AG04449 (cell line): ENCODE measurements at regions of chr9 and their contacts with region 1.

Region 1: DNA sequence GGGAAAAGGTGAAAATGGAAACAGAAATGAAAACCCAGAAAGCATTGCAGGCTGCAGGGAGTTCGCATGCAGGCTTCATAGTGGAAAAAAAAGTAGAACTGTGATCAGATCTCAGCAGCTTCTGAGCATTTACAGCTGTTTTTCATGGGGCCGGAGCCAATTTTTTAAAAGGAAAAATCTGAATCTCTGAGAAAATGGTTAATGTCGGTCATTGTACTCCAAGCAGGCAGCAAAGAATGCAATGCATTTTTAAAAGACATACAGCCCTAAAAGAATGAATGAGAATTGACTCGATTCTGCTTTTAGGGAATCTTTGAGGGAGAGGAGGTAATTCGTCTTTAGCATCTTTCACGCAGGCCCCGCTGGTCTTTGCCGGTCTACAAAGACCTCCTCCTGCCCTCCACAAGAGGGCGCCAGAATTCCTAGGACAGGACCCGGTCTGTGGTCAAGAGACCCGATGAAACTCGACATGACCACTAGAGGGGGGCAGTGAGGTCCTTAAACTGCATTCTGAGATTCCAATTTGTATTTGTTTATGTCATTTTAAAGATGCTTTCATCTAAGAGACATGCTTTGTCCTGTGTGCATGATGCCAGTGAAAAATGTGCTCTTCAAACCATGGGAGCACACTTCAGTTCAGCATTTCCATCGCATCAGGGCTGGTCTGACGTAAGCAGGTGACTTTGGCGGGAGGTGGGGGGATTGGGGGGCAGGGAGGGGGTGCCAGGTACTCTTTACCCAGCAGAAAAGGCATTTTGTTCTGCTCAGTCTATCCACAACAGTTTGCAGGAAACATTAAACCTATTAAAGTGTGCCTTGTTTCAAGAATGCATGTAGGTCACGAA is 43.7 kb upstream of the TMEM252 start:
- DNase-seq: peak; percentile 33
- H3K4me3 ChIP-seq: no peak overlapping the region
- CTCF ChIP-seq: peak; percentile 97

Region 2: DNA sequence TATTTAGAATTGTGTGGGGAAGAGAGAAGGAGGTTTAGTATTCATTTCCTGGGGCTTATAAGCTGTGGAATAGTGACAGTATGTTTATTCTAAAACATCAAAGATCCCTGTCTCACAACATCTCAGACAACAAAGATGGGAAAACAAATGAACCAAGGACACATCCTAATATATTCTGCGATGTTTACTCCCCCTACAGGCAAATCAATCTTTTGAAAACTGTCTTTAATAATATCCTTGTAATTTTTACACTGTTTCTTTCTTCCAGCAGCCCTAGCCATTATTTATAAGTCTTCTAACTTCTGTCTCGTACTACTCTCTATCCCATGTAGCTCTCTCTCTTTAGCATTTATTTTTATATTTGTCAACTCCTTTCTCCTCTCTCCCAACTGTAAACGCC is 10.3 kb before region 1 on chr9:
- CTCF ChIA-PET with region 1: interaction called, 20 read pairs
- POLR2A ChIA-PET with region 1: no interaction called
- DNase-seq: no peak
- H3K4me3 ChIP-seq: no peak overlapping the region
- CTCF ChIP-seq: no peak

Region 3: GRCh38 chr9:68941780-68942459 is 357.5 kb after region 1 on chr9:
- CTCF ChIA-PET with region 1: no interaction called
- POLR2A ChIA-PET with region 1: no interaction called
- DNase-seq: no peak
- H3K4me3 ChIP-seq: no peak overlapping the region
- CTCF ChIP-seq: no peak

Region 4: GRCh38 chr9:68999393-69000105 is 415.1 kb after region 1 on chr9:
- CTCF ChIA-PET with region 1: interaction called, 22 read pairs
- POLR2A ChIA-PET with region 1: interaction called, 3 read pairs
- DNase-seq: peak; percentile 12
- H3K4me3 ChIP-seq: no peak overlapping the region
- CTCF ChIP-seq: peak; percentile 82

Region 5: DNA sequence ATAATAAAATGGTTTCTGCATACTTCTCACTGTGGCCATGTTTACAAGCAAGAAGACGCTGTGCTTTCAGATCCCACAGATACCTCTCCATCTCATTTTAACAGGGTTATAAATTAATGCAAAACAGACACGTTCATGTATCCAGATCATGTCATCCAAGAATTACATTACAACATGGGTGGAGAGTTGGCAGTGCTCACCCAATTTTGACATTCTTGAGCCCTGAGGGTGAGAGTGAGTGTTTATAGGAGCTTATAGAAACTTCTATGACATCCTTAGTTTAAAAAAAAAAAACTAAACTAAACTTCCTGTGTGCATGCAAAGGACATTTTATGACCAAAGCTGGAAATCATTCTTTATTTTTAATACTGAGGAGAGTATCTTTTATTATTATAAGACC is 420.4 kb after region 1 on chr9:
- CTCF ChIA-PET with region 1: interaction called, 22 read pairs
- POLR2A ChIA-PET with region 1: interaction called, 3 read pairs
- DNase-seq: no peak
- H3K4me3 ChIP-seq: no peak overlapping the region
- CTCF ChIP-seq: no peak